Gastrocnemius medialis (tissue), 4 donors: ENCODE measurements at regions of chr21 and their contacts with region 1.

Region 1: DNA sequence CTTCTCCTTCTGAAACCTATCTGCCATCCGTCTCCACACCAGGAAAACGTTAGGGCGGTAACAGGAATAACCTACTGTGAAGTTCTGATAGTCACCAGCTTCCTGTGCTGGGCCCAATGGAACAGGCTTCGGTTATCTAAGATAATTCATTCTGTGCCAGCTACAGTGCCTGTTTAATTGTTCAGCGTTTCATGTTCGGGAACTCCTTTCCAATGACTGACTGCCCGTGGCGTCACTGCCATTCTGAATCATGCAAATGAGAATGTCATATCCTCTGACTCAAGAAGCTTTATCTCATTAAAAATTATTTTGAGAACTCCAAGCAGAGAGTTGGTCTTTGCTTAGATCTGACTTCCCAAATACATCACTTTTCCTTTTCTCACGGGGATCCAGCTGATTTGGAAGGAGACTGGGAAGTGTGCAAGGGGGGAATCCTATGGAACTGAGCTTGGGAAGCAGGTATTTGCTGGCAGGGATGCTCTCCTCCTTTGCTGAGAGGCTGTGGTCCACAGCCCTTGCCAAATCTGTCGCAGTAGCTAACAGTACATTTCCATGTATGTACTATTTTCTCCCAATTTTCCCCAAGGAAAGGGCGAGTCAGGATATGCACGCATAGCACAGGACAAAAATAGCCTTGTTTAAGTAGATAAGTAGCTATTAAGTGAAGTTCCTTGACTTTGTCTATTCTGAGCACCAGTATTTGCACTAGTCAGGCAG is 358.7 kb downstream of the LTN1 start:
- DNase-seq: no peak
- ATAC-seq: peak; percentile 75 to 78
- H3K4me3 ChIP-seq: no peak overlapping the region
- H3K27ac ChIP-seq: peak overlapping the region; percentile 26 to 70 (median 58)
- H3K4me1 ChIP-seq: peaks cover 9 to 11% of the 10 kb centered on the region in 2 donors
- H3K27me3 ChIP-seq: no peaks in the 10 kb centered on the region
- CTCF ChIP-seq: no peak
- POLR2A ChIP-seq: no peak

Region 2: DNA sequence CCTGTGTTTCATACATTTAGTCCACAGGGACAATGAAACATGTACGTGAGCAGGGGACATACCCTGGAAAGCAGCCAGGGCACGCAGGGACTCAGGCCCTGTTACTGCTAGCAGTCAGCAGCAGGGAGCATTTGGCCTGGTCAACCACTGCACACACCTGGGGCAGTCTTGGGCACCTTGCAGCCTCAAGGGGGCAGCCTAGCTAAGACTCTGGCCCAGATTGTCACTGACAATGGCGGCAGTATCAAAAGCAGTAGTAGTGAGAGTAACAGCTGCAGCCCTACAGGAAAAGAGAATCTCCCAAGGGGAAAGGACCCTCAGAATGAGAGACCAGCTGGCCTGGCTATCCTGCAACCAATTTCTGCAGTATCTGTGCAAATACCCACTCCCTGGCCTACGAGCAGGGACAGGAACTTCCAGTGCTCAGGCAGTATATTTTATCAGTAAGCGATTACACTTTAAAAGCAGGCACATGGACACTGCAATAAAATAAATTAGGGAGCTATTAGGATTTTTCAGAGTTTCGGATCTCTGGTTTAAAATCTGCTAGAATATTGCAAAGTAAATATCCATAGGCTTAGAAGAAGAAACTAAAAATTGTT is 116.9 kb before region 1 on chr21:
- in situ Hi-C with region 1: no loop called
- intact Hi-C with region 1: loop called (anchors 10 kb)
- DNase-seq: peak; percentile 18 to 37
- ATAC-seq: peak; percentile 69 to 78
- H3K4me3 ChIP-seq: no peak overlapping the region
- H3K27ac ChIP-seq: no peak overlapping the region
- H3K4me1 ChIP-seq: peaks cover 9% of the 10 kb centered on the region in 2 donors
- H3K27me3 ChIP-seq: no peaks in the 10 kb centered on the region
- CTCF ChIP-seq: peak in 4 of 5 experiments; percentile 37 to 74 (median 52)
- POLR2A ChIP-seq: no peak